Heart right ventricle (tissue), 16 donors: ENCODE measurements at regions of chr2 and their contacts with region 1.

Region 1: DNA sequence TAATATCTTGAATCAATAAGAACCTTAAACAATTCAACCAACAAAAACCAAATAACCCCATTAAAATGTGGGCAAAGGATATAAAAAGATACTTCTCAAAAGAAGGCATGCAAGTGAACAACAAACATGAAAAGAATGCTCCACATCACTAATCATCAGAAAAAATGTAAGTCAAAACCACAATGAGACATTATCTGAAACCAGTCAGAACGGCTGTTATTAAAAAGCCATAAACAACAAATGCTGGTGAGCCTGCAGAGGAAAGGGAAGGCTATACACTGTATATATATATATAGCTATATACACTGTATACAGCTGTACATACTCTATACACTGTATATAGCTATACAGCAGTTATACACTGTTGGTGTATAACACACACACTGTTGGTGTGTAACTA is 47.8 kb upstream of the GALNT13 start:
- DNase-seq: no peak
- ATAC-seq: no peak
- H3K4me3 ChIP-seq: no peak overlapping the region
- H3K27ac ChIP-seq: no peak overlapping the region
- H3K4me1 ChIP-seq: no peaks in the 10 kb centered on the region
- H3K27me3 ChIP-seq: no peaks in the 10 kb centered on the region
- CTCF ChIP-seq: no peak

Region 2: DNA sequence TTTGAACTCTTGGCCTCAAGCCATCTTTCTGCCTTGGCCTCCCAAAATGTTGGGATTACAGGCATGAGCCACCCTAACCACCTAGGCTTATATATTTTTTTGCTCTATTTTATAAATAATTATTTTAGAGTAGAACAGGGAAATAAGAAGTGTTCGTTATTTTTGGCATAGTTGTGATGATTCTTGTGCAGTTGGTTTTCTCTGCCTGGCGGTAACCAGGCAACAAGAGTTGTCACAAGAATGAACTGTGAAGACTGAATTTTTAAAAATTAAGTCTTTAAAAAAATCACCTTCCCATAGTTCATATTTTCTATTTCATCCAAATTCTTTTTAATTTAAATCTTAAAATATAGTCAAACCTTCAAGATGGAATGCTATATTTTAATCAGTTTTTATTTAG is 795.3 kb before region 1 on chr2:
- intact Hi-C with region 1: loop called in 1 of 10 experiments (anchors 10 kb)
- DNase-seq: no peak
- ATAC-seq: no peak
- H3K4me3 ChIP-seq: no peak overlapping the region
- H3K27ac ChIP-seq: no peak overlapping the region
- H3K4me1 ChIP-seq: no peaks in the 10 kb centered on the region
- H3K27me3 ChIP-seq: no peaks in the 10 kb centered on the region
- CTCF ChIP-seq: no peak

Region 3: GRCh38 chr2:153871231-153872221 is 47.6 kb after region 1 on chr2 and contains the start of gene GALNT13:
- intact Hi-C with region 1: no loop called
- DNase-seq: peak in 1 of 2 donors; percentile 15
- ATAC-seq: peak in 6 of 8 donors; percentile 61 to 85 (median 66)
- H3K4me3 ChIP-seq: peak within 1 kb of the TSS in 5 of 10 donors; percentile 14 to 38 (median 24)
- H3K27ac ChIP-seq: no peak within 1 kb of the TSS
- H3K4me1 ChIP-seq: peaks cover 0 to 4% (median 0%) of the 10 kb centered on the region in 9 donors
- H3K27me3 ChIP-seq: peaks cover 6 to 61% (median 44%) of the 10 kb centered on the region in 7 donors
- CTCF ChIP-seq: no peak
- total RNA-seq, gene GALNT13: 0.05 to 0.30 TPM in 2 of 10 donors, not detected in the others

Region 4: DNA sequence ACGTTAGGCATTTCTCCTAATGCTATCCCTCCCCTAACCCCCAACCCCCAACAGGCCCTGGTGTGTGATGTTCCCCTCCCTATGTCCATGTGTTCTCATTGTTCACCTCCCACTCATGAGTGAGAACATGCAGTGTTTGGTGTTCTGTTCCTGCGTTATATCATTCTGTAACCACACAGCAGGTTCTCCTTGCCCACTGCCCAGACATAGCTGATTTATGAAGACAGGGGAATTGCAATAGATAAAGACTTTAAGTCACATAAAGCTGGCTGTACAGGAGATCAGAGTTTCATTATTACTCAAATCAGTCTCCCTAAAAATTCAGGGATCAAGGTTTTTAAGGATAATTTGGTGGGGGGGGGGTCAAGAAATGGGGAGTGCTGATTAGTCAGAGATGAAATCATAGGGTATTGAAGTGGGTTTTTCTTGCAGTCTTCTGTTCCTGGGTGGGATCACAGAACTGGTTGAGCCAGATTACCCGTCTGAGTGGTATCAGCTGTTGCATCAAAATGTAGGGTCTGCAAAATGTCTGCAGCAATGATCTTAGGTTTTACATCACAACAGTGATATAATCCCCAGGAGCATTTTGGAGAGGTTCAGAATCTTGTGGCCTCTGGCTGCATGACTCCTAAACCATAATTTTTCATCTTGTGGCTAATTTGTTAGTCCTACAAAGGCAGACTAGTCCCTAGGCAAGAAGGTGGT is 482.5 kb after region 1 on chr2:
- intact Hi-C with region 1: loop called in 1 of 10 experiments (anchors 5 kb)
- DNase-seq: no peak
- ATAC-seq: no peak
- H3K4me3 ChIP-seq: no peak overlapping the region
- H3K27ac ChIP-seq: no peak overlapping the region
- H3K4me1 ChIP-seq: no peaks in the 10 kb centered on the region
- H3K27me3 ChIP-seq: no peaks in the 10 kb centered on the region
- CTCF ChIP-seq: no peak